ENCODE measurements at regions of chr16 and their contacts with region 1.

Region 1: DNA sequence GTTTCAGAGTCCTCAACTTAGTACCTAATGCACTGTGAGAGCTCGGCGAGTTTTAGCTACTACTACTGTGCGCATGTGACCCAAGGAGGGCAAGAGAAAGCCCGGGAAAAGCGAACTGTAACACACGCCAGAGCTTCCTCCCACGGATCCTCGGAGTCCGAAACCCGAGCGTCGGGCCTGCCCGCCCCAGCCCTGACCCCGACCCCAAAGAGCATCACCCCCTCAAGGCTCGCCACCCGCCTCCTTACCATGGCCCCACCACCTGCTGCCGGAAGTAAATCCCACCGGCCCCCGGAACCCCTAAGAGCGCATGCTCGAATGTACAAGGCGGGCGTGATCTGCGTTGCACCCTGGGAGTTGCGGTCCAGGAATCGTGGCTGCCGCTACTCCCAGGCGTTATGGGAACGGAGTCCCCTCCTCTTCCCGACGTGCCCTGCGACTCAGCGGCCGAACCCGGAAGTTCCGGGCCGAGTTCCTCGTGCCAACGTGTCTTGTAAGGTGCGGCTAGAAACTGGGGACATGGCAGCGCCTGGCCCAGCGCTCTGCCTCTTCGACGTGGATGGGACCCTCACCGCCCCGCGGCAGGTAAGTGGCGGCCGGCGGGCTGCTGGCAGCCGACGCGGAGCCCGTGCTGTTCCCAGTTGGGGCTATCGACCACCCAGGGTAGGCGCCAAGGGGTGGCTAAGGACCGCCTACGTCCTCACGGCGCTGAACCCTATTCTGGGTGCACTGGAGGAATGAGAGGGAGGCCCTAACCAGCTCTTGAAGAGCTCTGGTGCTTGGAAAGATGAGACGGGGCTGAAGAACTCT is at the starts of genes PMM2 and TMEM186:
- DNase-seq: peak; percentile 95 to 98 (median 96)
- ATAC-seq: peak; percentile 99
- H3K4me3 ChIP-seq: peak within 1 kb of the TSS; percentile 69
- H3K27ac ChIP-seq: peak within 1 kb of the TSS; percentile 88
- H3K4me1 ChIP-seq: peaks cover 12 to 13% of the 10 kb centered on the region in 2 experiments; a peak in 4 of 5 replicates
- H3K27me3 ChIP-seq: no peaks in the 10 kb centered on the region
- CTCF ChIP-seq: no peak
- EP300 ChIP-seq: no peak
- POLR2A ChIP-seq: peak; percentile 92
- RAD21 ChIP-seq: no peak
- polyA plus RNA-seq, gene PMM2: 5.6 to 7.8 TPM
- polyA plus RNA-seq, gene TMEM186: 27.3 to 33.4 TPM

Region 2: GRCh38 chr16:8655184-8655717 is 142.3 kb before region 1 on chr16:
- CTCF ChIA-PET with region 1: no interaction called
- POLR2A ChIA-PET with region 1: no interaction called
- in situ Hi-C with region 1: no loop called
- intact Hi-C with region 1: loop called (anchors 5 kb)
- DNase-seq: peak in 3 of 4 experiments; percentile 17 to 37 (median 22)
- ATAC-seq: peak; percentile 82
- H3K4me3 ChIP-seq: no peak overlapping the region
- H3K27ac ChIP-seq: no peak overlapping the region
- H3K4me1 ChIP-seq: no peaks in the 10 kb centered on the region; a peak in 1 of 5 replicates
- H3K27me3 ChIP-seq: peaks cover 4 to 18% of the 10 kb centered on the region in 2 experiments; a peak in 2 of 5 replicates
- CTCF ChIP-seq: peak; percentile 23 to 39 (median 26); a peak in 1 of 6 replicates
- EP300 ChIP-seq: no peak
- POLR2A ChIP-seq: no peak
- RAD21 ChIP-seq: peak in 1 of 2 experiments; percentile 25; a peak in 2 of 4 replicates

Region 3: DNA sequence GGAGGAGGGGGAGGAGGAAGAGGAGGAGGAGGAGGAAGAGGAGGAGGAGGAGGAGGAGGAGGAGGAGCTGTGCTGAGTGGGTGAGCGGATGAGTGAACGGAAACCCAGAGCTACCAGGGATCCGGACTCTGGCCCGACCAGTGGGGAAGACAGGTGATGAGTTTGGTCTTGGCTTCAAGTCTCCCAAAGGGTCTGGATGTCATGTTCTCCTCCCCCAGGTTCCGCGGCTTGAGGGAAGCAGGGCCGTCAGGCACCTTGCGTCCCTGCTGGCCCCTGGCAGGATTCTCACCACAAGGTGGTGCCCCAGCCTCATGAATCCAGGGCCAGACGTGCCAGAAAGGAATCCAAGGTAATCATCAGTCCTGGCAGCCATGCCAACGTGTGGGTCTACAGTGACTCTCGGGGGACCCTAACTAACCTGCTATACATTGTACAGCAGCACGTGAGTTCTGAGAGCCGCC is 136.7 kb before region 1 on chr16:
- CTCF ChIA-PET with region 1: interaction called, 3 read pairs
- POLR2A ChIA-PET with region 1: no interaction called
- in situ Hi-C with region 1: no loop called
- intact Hi-C with region 1: loop called (anchors 5 kb)
- DNase-seq: peak; percentile 36 to 65 (median 48)
- ATAC-seq: peak; percentile 91
- H3K4me3 ChIP-seq: no peak overlapping the region
- H3K27ac ChIP-seq: no peak overlapping the region
- H3K4me1 ChIP-seq: no peaks in the 10 kb centered on the region
- H3K27me3 ChIP-seq: peaks cover 4 to 18% of the 10 kb centered on the region in 2 experiments; a peak in 2 of 5 replicates
- CTCF ChIP-seq: peak; percentile 71 to 72 (median 71)
- EP300 ChIP-seq: no peak
- POLR2A ChIP-seq: no peak
- RAD21 ChIP-seq: peak; percentile 55 to 86

Region 4: GRCh38 chr16:8874388-8874787 is 76.8 kb after region 1 on chr16:
- CTCF ChIA-PET with region 1: no interaction called
- POLR2A ChIA-PET with region 1: no interaction called
- in situ Hi-C with region 1: no loop called
- intact Hi-C with region 1: no loop called
- DNase-seq: no peak
- ATAC-seq: no peak
- H3K4me3 ChIP-seq: no peak overlapping the region
- H3K27ac ChIP-seq: no peak overlapping the region
- H3K4me1 ChIP-seq: peaks cover 14 to 18% of the 10 kb centered on the region in 2 experiments
- H3K27me3 ChIP-seq: peaks cover 0 to 12% of the 10 kb centered on the region in 2 experiments; a peak in 2 of 5 replicates
- CTCF ChIP-seq: no peak
- EP300 ChIP-seq: no peak
- POLR2A ChIP-seq: no peak
- RAD21 ChIP-seq: no peak